ENCODE measurements at regions of chr11 and their contacts with region 1.

Region 1: DNA sequence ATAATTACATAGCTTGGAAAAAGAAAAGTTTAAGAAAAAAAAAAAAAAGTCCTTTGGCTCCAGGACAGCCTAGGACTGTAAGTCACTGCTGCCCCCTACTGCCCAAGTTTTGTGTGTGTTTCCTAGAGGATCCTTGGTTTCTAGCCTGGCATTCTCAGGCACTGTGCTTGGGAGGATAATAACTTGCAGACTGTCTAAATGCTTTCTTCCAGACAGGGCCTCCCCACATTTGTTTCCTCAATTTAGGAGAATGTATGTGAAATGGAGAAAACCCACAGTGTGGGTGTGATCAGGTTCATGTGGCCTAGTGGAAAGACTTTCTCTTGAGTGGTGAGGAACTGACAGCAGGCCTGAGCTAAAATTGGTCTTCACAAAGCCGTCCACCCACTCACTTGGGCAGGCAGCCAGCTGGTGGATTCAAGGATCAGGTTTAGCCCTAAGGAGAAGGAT is 191.0 kb downstream of the NAV2 start:
- DNase-seq: peak; percentile 3
- ATAC-seq: peak; percentile 78
- H3K4me3 ChIP-seq: no peak overlapping the region
- H3K27ac ChIP-seq: no peak overlapping the region
- H3K4me1 ChIP-seq: no peaks in the 10 kb centered on the region
- H3K27me3 ChIP-seq: no peaks in the 10 kb centered on the region
- CTCF ChIP-seq: peak; percentile 77 to 87 (median 78)
- EP300 ChIP-seq: no peak
- POLR2A ChIP-seq: no peak
- RAD21 ChIP-seq: peak; percentile 94

Region 2: DNA sequence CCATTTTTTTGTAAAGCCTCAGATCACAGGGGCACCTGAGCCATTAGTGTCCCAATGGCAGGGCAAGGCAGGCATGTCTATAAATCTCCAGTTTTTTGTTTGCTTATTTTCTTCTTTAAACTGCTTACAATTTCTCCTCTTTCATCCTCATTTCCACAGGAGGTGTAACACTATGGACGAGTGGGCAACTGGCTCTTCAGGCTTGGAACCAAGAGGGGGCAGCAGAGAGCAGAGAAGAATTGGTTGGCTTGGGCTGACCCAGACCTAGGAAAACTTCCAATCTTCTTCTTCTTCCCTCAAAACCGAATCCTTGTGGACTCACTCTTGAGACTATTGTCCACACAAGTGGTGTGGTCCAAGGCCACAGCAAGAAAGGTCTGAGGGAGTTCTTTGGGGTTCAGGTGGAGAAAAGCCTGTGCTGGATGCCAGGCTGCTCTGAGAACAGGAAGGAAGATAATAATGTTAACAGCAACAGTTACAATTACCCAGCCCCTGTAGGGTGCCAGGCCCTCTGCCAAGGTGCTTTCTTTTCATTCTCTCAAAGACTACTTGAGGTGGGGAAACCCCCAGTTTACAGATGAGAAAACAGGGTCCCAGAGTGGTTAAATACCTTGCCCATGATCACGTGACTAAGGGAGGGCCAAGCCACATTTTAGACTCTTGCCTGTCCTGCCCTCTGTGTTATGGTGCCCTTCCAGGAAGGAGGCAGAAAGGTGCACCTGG is 592.2 kb before region 1 on chr11:
- CTCF ChIA-PET with region 1: no interaction called
- POLR2A ChIA-PET with region 1: no interaction called
- RAD21 ChIA-PET with region 1: no interaction called
- SMC1A ChIA-PET with region 1: no interaction called
- in situ Hi-C with region 1: loop called (anchors 10 kb)
- intact Hi-C with region 1: loop called (anchors 10 kb)
- DNase-seq: peak; percentile 19
- ATAC-seq: peak; percentile 92
- H3K4me3 ChIP-seq: no peak overlapping the region
- H3K27ac ChIP-seq: no peak overlapping the region
- H3K4me1 ChIP-seq: peaks cover 6% of the 10 kb centered on the region; the same call in 1 of the 2 replicates
- H3K27me3 ChIP-seq: no peaks in the 10 kb centered on the region
- CTCF ChIP-seq: peak; percentile 75 to 86 (median 79)
- EP300 ChIP-seq: no peak
- POLR2A ChIP-seq: no peak
- RAD21 ChIP-seq: peak; percentile 81

Region 3: GRCh38 chr11:19566583-19567379 is 336.9 kb before region 1 on chr11:
- CTCF ChIA-PET with region 1: interaction called, 91 read pairs
- POLR2A ChIA-PET with region 1: interaction called, 3 read pairs
- RAD21 ChIA-PET with region 1: interaction called, 48 read pairs
- SMC1A ChIA-PET with region 1: interaction called, 53 read pairs
- in situ Hi-C with region 1: loop called (anchors 5 kb)
- intact Hi-C with region 1: loop called (anchors 1 kb)
- DNase-seq: no peak
- ATAC-seq: no peak
- H3K4me3 ChIP-seq: no peak overlapping the region
- H3K27ac ChIP-seq: no peak overlapping the region
- H3K4me1 ChIP-seq: no peaks in the 10 kb centered on the region
- H3K27me3 ChIP-seq: no peaks in the 10 kb centered on the region; a peak in 2 of 4 replicates
- CTCF ChIP-seq: no peak
- EP300 ChIP-seq: no peak
- POLR2A ChIP-seq: no peak
- RAD21 ChIP-seq: no peak

Region 4: DNA sequence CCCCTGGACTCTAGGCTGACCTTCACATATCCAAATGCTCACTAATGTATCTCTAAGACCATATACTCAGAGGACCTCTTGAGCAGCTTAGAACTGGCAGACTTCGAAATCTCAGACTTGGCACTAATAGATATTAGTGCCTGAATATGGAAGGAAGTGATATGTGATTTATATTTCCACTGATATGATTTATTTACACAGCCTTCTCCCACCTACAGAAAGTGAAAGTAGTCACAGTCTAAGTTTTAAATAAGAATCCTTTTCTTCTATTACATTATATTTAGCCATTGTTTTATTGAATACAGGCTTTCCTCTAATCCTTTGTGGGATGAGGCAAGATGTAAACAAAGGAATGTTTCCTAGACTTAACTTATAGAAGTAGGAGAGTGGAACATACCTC is 197.7 kb before region 1 on chr11:
- CTCF ChIA-PET with region 1: no interaction called
- POLR2A ChIA-PET with region 1: no interaction called
- RAD21 ChIA-PET with region 1: no interaction called
- SMC1A ChIA-PET with region 1: no interaction called
- in situ Hi-C with region 1: no loop called
- intact Hi-C with region 1: no loop called
- DNase-seq: no peak
- ATAC-seq: no peak
- H3K4me3 ChIP-seq: no peak overlapping the region
- H3K27ac ChIP-seq: no peak overlapping the region
- H3K4me1 ChIP-seq: no peaks in the 10 kb centered on the region
- H3K27me3 ChIP-seq: peaks cover 0 to 6% of the 10 kb centered on the region in 2 experiments; a peak in 1 of 4 replicates
- CTCF ChIP-seq: no peak
- EP300 ChIP-seq: no peak
- POLR2A ChIP-seq: no peak
- RAD21 ChIP-seq: no peak

Region 5: GRCh38 chr11:19814421-19814820 is 89.2 kb before region 1 on chr11:
- CTCF ChIA-PET with region 1: interaction called, 21 read pairs
- POLR2A ChIA-PET with region 1: no interaction called
- RAD21 ChIA-PET with region 1: interaction called, 4 read pairs
- SMC1A ChIA-PET with region 1: interaction called, 9 read pairs
- in situ Hi-C with region 1: no loop called
- intact Hi-C with region 1: loop called (anchors 1 kb)
- DNase-seq: no peak
- ATAC-seq: no peak
- H3K4me3 ChIP-seq: no peak overlapping the region
- H3K27ac ChIP-seq: no peak overlapping the region
- H3K4me1 ChIP-seq: no peaks in the 10 kb centered on the region
- H3K27me3 ChIP-seq: no peaks in the 10 kb centered on the region
- CTCF ChIP-seq: peak; percentile 10 to 47 (median 11); a peak in 3 of 6 replicates
- EP300 ChIP-seq: no peak
- POLR2A ChIP-seq: no peak
- RAD21 ChIP-seq: peak; percentile 29; the same call in 1 of the 2 replicates

Region 6: DNA sequence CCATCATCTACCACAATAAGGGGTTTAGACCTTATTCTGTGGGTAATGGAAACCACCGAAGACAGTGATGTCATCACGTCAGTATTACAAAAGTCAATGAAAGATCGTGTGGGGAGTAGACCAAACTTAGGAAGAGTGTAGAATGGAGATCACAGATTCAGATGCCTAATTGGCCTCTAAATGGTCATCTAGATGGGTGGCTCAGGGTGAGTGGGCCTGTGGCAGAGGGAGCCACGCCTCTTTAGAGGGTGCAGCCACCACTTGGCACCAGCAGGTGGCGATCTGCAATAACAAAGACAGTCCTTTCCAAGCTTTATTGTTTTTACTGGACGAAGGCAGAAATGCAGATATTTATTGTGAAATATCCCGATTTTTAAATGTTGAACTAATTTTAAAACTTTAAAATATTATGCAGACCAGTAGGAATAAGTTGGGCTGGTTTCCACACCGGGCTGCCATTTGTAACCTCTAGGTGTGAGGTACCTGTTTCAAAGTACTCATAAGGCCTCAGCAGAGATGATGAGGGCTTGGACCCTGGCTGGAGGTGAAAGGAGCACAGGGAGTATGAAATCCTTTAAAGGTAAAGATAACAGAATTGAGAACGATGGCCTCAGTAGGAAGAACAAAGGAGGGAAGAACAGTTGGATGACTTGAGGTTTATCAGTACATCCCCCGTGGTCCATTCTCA is 34.7 kb after region 1 on chr11:
- CTCF ChIA-PET with region 1: interaction called, 10 read pairs
- POLR2A ChIA-PET with region 1: no interaction called
- RAD21 ChIA-PET with region 1: interaction called, 3 read pairs
- SMC1A ChIA-PET with region 1: no interaction called
- in situ Hi-C with region 1: no loop called
- intact Hi-C with region 1: loop called (anchors 2 kb)
- DNase-seq: no peak
- ATAC-seq: peak; percentile 87
- H3K4me3 ChIP-seq: no peak overlapping the region
- H3K27ac ChIP-seq: no peak overlapping the region
- H3K4me1 ChIP-seq: peaks cover 4% of the 10 kb centered on the region; the same call in 1 of the 2 replicates
- H3K27me3 ChIP-seq: no peaks in the 10 kb centered on the region
- CTCF ChIP-seq: peak; percentile 64 to 93 (median 83)
- EP300 ChIP-seq: no peak
- POLR2A ChIP-seq: no peak
- RAD21 ChIP-seq: peak; percentile 53

Region 7: DNA sequence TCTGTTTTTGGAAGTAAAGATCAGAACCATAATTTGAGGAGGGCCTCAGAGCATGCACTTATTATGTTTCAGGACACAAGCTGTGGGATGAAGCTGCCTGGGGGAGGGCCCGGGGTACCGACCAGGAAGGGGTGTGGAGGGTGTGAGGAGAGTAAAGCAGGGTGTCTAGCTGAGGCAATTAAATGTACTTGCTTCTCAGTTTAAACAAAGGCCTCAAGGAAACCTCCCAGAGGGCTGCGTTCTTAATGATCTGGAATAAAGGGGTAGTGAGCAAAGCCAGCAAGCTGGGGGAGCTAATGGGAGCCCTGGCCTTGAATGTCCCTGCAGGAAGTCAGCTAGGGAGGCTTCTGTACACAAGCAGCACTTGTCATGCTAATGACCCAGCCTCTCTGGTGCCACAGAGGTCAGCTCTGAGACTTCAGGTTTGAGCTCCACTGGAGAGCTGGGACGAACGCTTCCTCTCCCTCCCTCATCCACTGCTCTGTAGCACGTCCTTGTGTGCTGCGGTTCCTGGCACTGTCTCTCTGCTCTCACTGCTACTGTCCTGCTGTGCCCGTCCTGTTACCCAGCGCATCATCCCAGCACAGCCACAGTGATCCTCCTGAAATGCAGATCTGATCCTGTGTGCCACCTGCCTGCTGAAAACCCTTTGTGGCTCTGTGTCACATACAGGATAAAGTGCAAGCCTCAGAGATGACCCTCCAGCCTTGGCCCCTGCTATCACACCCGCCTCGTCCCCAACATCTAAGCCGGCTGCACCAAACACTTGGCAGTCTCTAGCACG is 96.9 kb after region 1 on chr11:
- CTCF ChIA-PET with region 1: no interaction called
- POLR2A ChIA-PET with region 1: no interaction called
- RAD21 ChIA-PET with region 1: no interaction called
- SMC1A ChIA-PET with region 1: no interaction called
- in situ Hi-C with region 1: no loop called
- intact Hi-C with region 1: no loop called
- DNase-seq: no peak
- ATAC-seq: no peak
- H3K4me3 ChIP-seq: no peak overlapping the region
- H3K27ac ChIP-seq: no peak overlapping the region
- H3K4me1 ChIP-seq: no peaks in the 10 kb centered on the region
- H3K27me3 ChIP-seq: no peaks in the 10 kb centered on the region; a peak in 1 of 4 replicates
- CTCF ChIP-seq: no peak
- EP300 ChIP-seq: no peak
- POLR2A ChIP-seq: no peak
- RAD21 ChIP-seq: no peak

Measured in GM12878 (cell line).